Activated CD8-positive, alpha-beta memory T cell treated with anti-CD3 and anti-CD28 coated beads, Interleukin-2, amount 10 ng/mL, durations not matched to agents 7 days and 5 days (primary cell): ENCODE measurements at regions of chr11 and their contacts with region 1.

Region 1: DNA sequence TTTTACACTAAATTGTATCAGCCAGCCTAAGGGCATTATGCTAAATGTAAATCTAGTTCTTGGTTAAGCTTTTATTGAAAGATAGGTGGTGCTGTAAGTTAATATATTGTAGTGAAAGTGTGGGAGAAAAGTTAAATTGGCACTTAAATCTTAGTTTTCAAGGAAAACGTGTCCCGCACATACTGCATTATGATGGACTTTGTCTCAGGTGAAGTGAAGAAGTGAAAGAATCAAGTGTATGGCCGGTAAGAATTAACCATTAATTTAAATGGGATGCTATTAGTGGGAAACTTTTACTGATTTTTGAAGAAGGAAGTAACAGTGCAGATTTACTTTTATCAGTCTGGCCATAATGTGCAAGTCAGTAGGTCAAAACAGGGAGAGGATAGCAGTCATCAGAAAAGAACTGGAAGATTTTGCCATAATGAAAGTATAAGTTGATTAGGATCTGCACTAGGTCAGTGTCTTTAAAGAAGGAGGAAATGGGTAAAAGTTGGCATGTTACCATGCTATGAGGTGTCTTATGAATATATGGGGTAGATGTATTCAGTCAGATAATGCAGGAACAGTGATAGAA is 81.6 kb downstream of the PDHX start:
- DNase-seq: no peak
- ATAC-seq: peak; percentile 30
- H3K4me3 Mint-ChIP-seq: no peak overlapping the region
- H3K27ac Mint-ChIP-seq: no peak overlapping the region
- H3K4me1 Mint-ChIP-seq: peaks cover 17% of the 10 kb centered on the region
- H3K27me3 Mint-ChIP-seq: peaks cover 2% of the 10 kb centered on the region

Region 2: GRCh38 chr11:35021589-35021988 is 23.5 kb after region 1 on chr11:
- CTCF ChIA-PET with region 1: no interaction called
- DNase-seq: no peak
- ATAC-seq: no peak
- H3K4me3 Mint-ChIP-seq: no peak overlapping the region
- H3K27ac Mint-ChIP-seq: no peak overlapping the region
- H3K4me1 Mint-ChIP-seq: no peaks in the 10 kb centered on the region
- H3K27me3 Mint-ChIP-seq: peaks cover 9% of the 10 kb centered on the region

Region 3: DNA sequence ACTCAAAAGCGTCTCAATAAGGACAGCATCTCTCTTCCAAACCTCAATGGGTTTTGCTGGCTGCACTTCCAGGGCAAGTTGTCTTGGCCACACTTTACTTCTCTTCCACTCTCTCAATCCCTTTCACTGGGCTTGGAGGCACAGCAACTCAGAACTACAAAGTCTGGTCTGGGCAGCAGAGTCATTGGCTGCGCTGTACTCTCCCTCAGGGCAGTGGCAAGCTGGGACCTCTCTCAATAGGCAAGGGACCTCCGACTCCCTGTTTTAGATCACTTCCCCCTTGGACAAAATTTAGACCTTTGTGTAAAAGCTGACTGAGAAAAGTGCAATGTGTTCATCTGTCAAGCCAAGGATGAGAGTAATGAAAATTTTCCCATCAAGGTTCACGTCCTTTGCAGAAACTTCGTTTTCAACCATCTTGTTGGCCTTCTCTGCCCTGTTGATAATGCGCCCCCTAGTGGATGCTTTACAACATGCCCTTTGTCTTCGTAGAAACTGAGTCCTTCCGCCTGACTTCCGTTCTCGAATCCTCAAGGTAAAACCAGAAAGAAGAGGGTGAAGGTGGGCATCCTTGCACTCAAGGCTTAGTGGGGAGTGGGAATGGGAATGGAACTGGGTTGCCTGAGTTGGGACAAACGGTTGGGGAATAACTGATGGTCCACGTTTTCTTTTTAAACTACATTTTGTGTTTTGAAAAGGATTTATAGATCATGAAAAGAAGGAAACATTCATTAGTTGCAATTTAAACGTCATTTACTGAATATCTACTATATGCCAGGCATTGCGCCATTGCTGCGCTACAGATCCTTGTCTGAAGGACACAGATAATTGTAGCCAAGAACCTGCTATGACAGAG is 240.0 kb after region 1 on chr11:
- CTCF ChIA-PET with region 1: interaction called, 38 read pairs
- DNase-seq: peak; percentile 72
- ATAC-seq: peak; percentile 63
- H3K4me3 Mint-ChIP-seq: no peak overlapping the region
- H3K27ac Mint-ChIP-seq: no peak overlapping the region
- H3K4me1 Mint-ChIP-seq: peaks cover 57% of the 10 kb centered on the region
- H3K27me3 Mint-ChIP-seq: peaks cover 15% of the 10 kb centered on the region

Region 4: DNA sequence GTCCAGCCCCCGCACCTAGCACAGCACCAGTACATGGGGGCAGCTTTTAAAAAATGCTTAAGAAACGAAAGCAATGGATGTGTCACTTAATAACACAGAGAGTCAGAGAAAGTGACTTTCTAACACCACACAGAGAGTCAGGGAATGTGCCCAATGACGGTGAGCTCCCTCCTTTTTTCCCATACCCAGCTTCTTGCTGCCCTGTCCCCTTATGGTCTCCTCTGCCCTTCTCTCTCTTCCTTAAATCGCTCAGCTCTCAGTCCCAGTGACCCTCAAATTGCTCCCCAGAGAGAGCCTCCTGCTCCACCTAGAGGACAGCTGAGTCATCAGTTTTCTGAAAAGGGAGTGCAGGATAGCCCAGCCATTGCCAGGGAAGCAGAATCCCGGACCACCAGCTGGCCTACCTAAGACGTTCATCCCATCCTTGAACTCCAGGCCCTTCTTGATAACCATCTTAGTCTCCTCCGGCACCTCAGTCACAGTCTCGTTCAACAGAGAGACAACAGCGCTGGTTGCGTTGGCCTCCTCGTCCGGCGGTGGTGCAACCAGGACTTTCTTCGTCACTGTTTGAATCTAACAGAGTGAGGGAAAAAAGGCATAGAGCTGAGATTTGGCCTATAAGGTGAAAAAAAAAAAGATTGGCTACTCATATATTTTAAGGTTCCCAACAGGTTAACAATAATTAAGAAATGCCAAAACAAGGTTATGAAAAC is 307.8 kb after region 1 on chr11:
- CTCF ChIA-PET with region 1: interaction called, 24 read pairs
- DNase-seq: peak; percentile 55
- ATAC-seq: peak; percentile 68
- H3K4me3 Mint-ChIP-seq: no peak overlapping the region
- H3K27ac Mint-ChIP-seq: no peak overlapping the region
- H3K4me1 Mint-ChIP-seq: peaks cover 9% of the 10 kb centered on the region
- H3K27me3 Mint-ChIP-seq: no peaks in the 10 kb centered on the region